Transverse colon (tissue), 4 donors: ENCODE measurements at regions of chr13 and their contacts with region 1.

Region 1: DNA sequence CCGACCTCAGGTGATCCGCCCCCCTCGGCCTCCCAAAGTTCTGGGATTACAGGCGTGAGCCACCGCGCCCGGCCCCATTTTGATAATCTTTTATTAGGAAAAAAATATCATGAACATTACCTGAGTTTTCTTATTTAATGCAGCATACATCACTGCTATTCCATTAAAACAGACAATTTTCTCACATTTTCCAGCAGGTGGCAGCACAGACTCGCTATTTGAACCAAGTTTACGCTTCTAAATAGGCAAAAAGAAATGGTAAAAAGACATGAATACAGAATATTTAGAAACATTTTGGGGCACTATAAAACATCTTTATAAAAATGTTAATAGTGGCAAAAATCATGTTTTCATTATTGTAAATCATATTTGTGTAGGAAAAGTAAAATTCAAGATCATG is 903.1 kb downstream of the SLITRK6 start:
- DNase-seq: peak; percentile 11
- H3K4me3 ChIP-seq: no peak overlapping the region
- H3K27ac ChIP-seq: no peak overlapping the region
- H3K4me1 ChIP-seq: no peaks in the 10 kb centered on the region
- H3K27me3 ChIP-seq: no peaks in the 10 kb centered on the region
- CTCF ChIP-seq: peak; percentile 50 to 63 (median 58)
- EP300 ChIP-seq: no peak
- POLR2A ChIP-seq: no peak

Region 2: DNA sequence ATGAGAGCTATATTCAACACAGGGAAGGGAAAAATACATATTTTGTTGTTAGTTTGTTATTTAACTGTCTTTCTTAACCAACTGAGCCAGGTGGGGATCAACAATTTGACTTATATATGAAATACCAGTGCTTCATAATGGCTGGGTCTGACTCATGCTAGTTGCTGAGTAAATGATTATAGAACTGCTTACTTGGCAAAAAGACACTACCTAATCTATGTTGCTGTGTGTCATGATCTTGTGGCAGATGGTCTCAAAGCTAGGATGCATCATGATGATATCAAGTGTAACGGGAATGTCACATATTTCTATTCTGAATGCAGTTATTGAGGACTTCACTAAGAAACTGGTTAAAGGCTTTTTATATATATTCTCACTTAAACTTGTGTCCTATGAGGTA is 286.4 kb before region 1 on chr13:
- in situ Hi-C with region 1: no loop called
- intact Hi-C with region 1: no loop called
- DNase-seq: no peak
- H3K4me3 ChIP-seq: no peak overlapping the region
- H3K27ac ChIP-seq: no peak overlapping the region
- H3K4me1 ChIP-seq: no peaks in the 10 kb centered on the region
- H3K27me3 ChIP-seq: no peaks in the 10 kb centered on the region
- CTCF ChIP-seq: no peak
- EP300 ChIP-seq: no peak
- POLR2A ChIP-seq: no peak

Region 3: GRCh38 chr13:85806553-85807175 is 910.5 kb after region 1 on chr13:
- in situ Hi-C with region 1: loop called in 2 of 4 experiments (anchors 5 to 10 kb)
- intact Hi-C with region 1: no loop called
- DNase-seq: no peak
- H3K4me3 ChIP-seq: no peak overlapping the region
- H3K27ac ChIP-seq: no peak overlapping the region
- H3K4me1 ChIP-seq: peaks cover 0 to 2% (median 0%) of the 10 kb centered on the region in 4 donors
- H3K27me3 ChIP-seq: no peaks in the 10 kb centered on the region
- CTCF ChIP-seq: peak; percentile 59 to 73 (median 61)
- EP300 ChIP-seq: no peak
- POLR2A ChIP-seq: no peak

Region 4: GRCh38 chr13:85816413-85816812 is 920.3 kb after region 1 on chr13:
- in situ Hi-C with region 1: loop called in 1 of 4 experiments (anchors 10 kb)
- intact Hi-C with region 1: no loop called
- DNase-seq: no peak
- H3K4me3 ChIP-seq: no peak overlapping the region
- H3K27ac ChIP-seq: no peak overlapping the region
- H3K4me1 ChIP-seq: no peaks in the 10 kb centered on the region
- H3K27me3 ChIP-seq: no peaks in the 10 kb centered on the region
- CTCF ChIP-seq: no peak
- EP300 ChIP-seq: no peak
- POLR2A ChIP-seq: no peak